ENCODE measurements at regions of chr18 and their contacts with region 1.

Region 1: DNA sequence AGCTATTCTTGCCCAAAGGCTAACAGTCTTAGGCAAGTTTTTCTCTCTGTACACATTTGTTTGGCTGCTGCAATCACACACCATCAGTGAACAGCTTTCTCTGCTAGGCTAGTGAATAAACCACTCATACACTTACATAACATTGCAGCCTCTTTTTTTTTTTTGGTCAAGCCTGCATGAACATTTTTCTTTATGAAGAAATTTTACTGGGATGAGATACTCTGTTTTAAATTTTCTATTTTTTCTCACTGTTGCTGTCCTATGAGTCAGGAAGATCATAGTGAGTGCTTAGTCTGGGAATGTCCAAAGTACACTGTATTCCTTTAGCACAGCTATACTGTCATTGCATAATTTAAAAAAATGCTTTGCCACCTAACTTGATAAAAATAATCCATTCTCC is 58.5 kb downstream of the ROCK1 start:
- DNase-seq: no peak
- ATAC-seq: no peak
- H3K4me3 ChIP-seq: no peak overlapping the region
- H3K27ac ChIP-seq: no peak overlapping the region
- H3K4me1 ChIP-seq: no peaks in the 10 kb centered on the region; the same call in 1 of the 2 replicates
- H3K27me3 ChIP-seq: no peaks in the 10 kb centered on the region
- CTCF ChIP-seq: no peak
- EP300 ChIP-seq: no peak
- POLR2A ChIP-seq: no peak
- RAD21 ChIP-seq: no peak

Region 2: DNA sequence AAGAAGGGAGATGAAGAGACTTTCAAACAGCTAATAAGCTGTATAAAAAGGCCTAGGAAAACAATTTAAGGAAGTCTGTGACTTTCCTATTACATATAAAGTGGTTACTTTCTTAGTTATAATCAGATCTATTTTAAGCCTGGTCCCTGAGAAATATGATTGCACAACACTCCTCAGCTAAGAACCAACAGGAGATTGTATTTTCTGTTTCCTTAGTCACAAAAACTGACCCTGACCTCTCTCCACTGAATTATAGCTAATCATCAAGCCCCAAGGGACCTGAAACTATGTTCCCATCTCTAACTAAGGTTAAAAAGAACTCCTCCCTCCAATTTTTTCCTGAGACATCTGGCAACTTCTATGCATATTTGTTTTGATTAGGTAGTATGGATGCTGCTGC is 48.4 kb before region 1 on chr18:
- CTCF ChIA-PET with region 1: no interaction called
- POLR2A ChIA-PET with region 1: no interaction called
- RAD21 ChIA-PET with region 1: no interaction called
- SMC1A ChIA-PET with region 1: interaction called, 4 read pairs
- in situ Hi-C with region 1: no loop called
- intact Hi-C with region 1: loop called (anchors 5 kb)
- DNase-seq: no peak
- ATAC-seq: no peak
- H3K4me3 ChIP-seq: no peak overlapping the region
- H3K27ac ChIP-seq: no peak overlapping the region
- H3K4me1 ChIP-seq: no peaks in the 10 kb centered on the region
- H3K27me3 ChIP-seq: no peaks in the 10 kb centered on the region
- CTCF ChIP-seq: no peak
- EP300 ChIP-seq: no peak
- POLR2A ChIP-seq: no peak
- RAD21 ChIP-seq: no peak

Region 3: GRCh38 chr18:21038201-21038600 is 14.9 kb before region 1 on chr18:
- CTCF ChIA-PET with region 1: interaction called, 5 read pairs
- POLR2A ChIA-PET with region 1: interaction called, 5 read pairs
- RAD21 ChIA-PET with region 1: no interaction called
- SMC1A ChIA-PET with region 1: interaction called, 8 read pairs
- in situ Hi-C with region 1: no loop called
- intact Hi-C with region 1: loop called (anchors 2 kb)
- DNase-seq: no peak
- ATAC-seq: no peak
- H3K4me3 ChIP-seq: no peak overlapping the region
- H3K27ac ChIP-seq: no peak overlapping the region
- H3K4me1 ChIP-seq: no peaks in the 10 kb centered on the region
- H3K27me3 ChIP-seq: no peaks in the 10 kb centered on the region
- CTCF ChIP-seq: no peak
- EP300 ChIP-seq: no peak
- POLR2A ChIP-seq: no peak
- RAD21 ChIP-seq: no peak

Region 4: DNA sequence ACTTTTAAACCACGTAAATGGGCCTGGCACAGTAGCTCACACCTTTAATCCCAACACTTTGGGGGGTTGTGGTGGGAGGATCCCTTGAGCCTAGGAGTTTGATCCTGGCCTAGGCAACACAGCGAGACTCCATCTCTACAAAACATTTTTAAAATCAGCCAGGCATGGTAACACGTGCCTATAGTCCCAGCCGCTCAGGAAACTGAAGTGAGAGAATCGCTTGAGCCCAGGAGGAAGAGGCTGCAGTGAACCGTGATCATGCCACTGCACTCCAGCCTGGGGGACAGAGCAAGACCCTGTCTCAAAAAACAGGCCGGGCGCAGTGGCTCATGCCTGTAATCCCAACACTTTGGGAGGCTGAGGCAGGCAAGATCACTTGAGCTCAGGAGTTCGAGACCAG is 46.3 kb after region 1 on chr18:
- CTCF ChIA-PET with region 1: no interaction called
- POLR2A ChIA-PET with region 1: no interaction called
- RAD21 ChIA-PET with region 1: no interaction called
- SMC1A ChIA-PET with region 1: no interaction called
- in situ Hi-C with region 1: loop called (anchors 5 kb)
- intact Hi-C with region 1: loop called (anchors 5 kb)
- DNase-seq: no peak
- ATAC-seq: peak; percentile 78
- H3K4me3 ChIP-seq: peak overlapping the region; percentile 52
- H3K27ac ChIP-seq: peak overlapping the region; percentile 42
- H3K4me1 ChIP-seq: peaks cover 6% of the 10 kb centered on the region
- H3K27me3 ChIP-seq: no peaks in the 10 kb centered on the region
- CTCF ChIP-seq: no peak
- EP300 ChIP-seq: no peak
- POLR2A ChIP-seq: no peak
- RAD21 ChIP-seq: no peak

Region 5: DNA sequence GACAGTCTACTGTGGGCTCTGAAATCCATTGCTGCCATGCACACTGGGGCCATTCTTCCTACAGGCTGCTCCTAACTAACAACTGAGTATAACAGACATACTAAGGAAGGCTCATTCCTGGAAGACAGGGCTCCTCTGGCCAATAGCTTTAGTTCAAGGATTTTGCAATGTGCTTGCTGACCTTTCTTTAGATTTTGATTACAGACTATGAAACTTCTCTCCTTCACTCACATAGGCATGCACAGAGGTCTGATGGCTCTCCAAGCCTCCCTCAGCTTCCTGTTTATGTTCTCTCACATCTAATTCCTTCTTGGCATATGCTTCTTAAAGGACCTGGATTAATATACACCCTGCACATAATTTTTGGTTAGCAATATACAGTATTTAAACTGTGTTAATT is 92.9 kb after region 1 on chr18:
- CTCF ChIA-PET with region 1: no interaction called
- POLR2A ChIA-PET with region 1: no interaction called
- RAD21 ChIA-PET with region 1: no interaction called
- SMC1A ChIA-PET with region 1: no interaction called
- in situ Hi-C with region 1: no loop called
- intact Hi-C with region 1: no loop called
- DNase-seq: no peak
- ATAC-seq: no peak
- H3K4me3 ChIP-seq: no peak overlapping the region
- H3K27ac ChIP-seq: no peak overlapping the region
- H3K4me1 ChIP-seq: no peaks in the 10 kb centered on the region
- H3K27me3 ChIP-seq: no peaks in the 10 kb centered on the region
- CTCF ChIP-seq: no peak
- EP300 ChIP-seq: no peak
- POLR2A ChIP-seq: no peak
- RAD21 ChIP-seq: no peak

Region 6: DNA sequence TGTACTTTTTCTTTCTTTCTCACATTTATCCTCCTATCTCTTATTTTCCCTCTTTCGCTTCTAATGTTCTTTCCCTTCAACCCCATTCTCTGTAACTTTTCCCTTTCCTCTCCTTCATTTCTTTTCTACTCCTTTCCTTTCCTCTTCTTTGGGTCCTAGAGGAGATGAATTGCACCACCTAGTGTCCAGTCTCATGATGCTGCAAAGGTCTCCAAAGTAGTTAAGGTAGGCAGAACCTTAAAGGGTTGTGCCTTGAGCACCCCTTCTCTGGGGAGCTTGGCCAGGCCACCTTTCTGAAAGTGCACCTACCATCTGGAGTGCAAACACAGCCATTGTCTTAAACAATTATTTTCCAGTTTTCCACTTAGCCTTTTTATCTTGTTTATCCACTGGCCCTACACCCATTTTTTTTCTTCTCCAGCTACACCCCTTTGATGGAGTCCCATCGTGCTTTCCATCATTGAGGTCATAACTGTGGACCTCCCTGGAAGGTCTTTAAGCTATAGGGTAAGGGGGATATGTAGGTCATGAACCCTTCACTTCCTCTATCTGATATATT is 391.4 kb after region 1 on chr18:
- CTCF ChIA-PET with region 1: no interaction called
- POLR2A ChIA-PET with region 1: no interaction called
- RAD21 ChIA-PET with region 1: no interaction called
- SMC1A ChIA-PET with region 1: no interaction called
- in situ Hi-C with region 1: loop called (anchors 25 kb)
- intact Hi-C with region 1: no loop called
- DNase-seq: no peak
- ATAC-seq: peak; percentile 77
- H3K4me3 ChIP-seq: no peak overlapping the region
- H3K27ac ChIP-seq: no peak overlapping the region
- H3K4me1 ChIP-seq: no peaks in the 10 kb centered on the region
- H3K27me3 ChIP-seq: no peaks in the 10 kb centered on the region; a peak in 2 of 4 replicates
- CTCF ChIP-seq: peak; percentile 58 to 67 (median 64)
- EP300 ChIP-seq: no peak
- POLR2A ChIP-seq: no peak
- RAD21 ChIP-seq: peak; percentile 71

Region 7: GRCh38 chr18:21600526-21601410 is 547.6 kb after region 1 on chr18 and contains the start of gene ESCO1:
- CTCF ChIA-PET with region 1: no interaction called
- POLR2A ChIA-PET with region 1: no interaction called
- RAD21 ChIA-PET with region 1: no interaction called
- SMC1A ChIA-PET with region 1: no interaction called
- in situ Hi-C with region 1: loop called (anchors 25 kb)
- intact Hi-C with region 1: no loop called
- DNase-seq: peak; percentile 95
- ATAC-seq: peak; percentile 90
- H3K4me3 ChIP-seq: peak within 1 kb of the TSS; percentile 76
- H3K27ac ChIP-seq: peak within 1 kb of the TSS; percentile 90
- H3K4me1 ChIP-seq: peaks cover 27% of the 10 kb centered on the region
- H3K27me3 ChIP-seq: no peaks in the 10 kb centered on the region
- CTCF ChIP-seq: peak; percentile 90 to 95 (median 93)
- EP300 ChIP-seq: no peak; a peak in 1 of 4 replicates
- POLR2A ChIP-seq: peak; percentile 98
- RAD21 ChIP-seq: peak; percentile 38; the same call in 1 of the 2 replicates
- polyA plus RNA-seq, gene ESCO1: 9.6 to 11.2 TPM

Region 8: GRCh38 chr18:22971038-22971437 is 1917.9 kb after region 1 on chr18:
- CTCF ChIA-PET with region 1: no interaction called
- POLR2A ChIA-PET with region 1: no interaction called
- RAD21 ChIA-PET with region 1: no interaction called
- SMC1A ChIA-PET with region 1: no interaction called
- in situ Hi-C with region 1: loop called (anchors 25 kb)
- intact Hi-C with region 1: no loop called
- DNase-seq: no peak
- ATAC-seq: no peak
- H3K4me3 ChIP-seq: no peak overlapping the region
- H3K27ac ChIP-seq: no peak overlapping the region
- H3K4me1 ChIP-seq: no peaks in the 10 kb centered on the region
- H3K27me3 ChIP-seq: no peaks in the 10 kb centered on the region
- CTCF ChIP-seq: no peak
- EP300 ChIP-seq: no peak
- POLR2A ChIP-seq: no peak
- RAD21 ChIP-seq: no peak